ENCODE measurements at regions of chr16 and their contacts with region 1.

Region 1: DNA sequence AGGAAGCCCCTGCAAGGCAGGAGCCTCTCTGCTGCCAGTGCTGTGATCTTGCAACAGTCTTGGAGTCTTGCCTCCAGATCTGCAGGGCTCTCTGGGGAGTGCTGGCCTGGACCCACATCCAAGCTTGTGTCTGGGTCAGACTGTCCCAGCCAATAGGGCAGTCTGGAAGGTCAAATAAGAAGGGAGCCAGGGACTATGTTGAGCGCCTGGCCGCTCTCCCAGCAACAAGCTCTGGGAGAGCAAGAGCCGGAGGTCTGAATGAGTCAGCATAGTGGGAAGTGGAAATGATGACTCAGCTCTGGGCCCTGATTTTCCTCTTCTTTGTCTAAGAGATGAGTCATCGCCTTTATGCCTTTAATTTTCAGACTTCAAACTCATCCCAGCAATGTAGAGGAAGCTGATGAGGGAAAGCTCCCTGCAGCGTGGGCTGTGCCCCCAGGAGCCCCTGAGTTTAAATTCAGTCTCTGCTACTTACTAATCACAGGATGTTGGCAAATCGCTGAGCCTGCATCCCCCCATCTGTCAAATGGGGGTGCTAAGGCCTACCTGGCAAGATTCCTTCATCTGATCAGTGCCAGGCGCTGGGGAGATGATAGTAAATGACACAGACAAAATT is 43.6 kb upstream of the HAPSTR1 start:
- DNase-seq: peak in 1 of 2 donors; percentile 98
- H3K4me3 ChIP-seq: no peak overlapping the region
- H3K27ac ChIP-seq: peak overlapping the region; percentile 75
- H3K4me1 ChIP-seq: peaks cover 21% of the 10 kb centered on the region
- H3K27me3 ChIP-seq: no peaks in the 10 kb centered on the region
- CTCF ChIP-seq: no peak
- POLR2A ChIP-seq: no peak

Region 2: DNA sequence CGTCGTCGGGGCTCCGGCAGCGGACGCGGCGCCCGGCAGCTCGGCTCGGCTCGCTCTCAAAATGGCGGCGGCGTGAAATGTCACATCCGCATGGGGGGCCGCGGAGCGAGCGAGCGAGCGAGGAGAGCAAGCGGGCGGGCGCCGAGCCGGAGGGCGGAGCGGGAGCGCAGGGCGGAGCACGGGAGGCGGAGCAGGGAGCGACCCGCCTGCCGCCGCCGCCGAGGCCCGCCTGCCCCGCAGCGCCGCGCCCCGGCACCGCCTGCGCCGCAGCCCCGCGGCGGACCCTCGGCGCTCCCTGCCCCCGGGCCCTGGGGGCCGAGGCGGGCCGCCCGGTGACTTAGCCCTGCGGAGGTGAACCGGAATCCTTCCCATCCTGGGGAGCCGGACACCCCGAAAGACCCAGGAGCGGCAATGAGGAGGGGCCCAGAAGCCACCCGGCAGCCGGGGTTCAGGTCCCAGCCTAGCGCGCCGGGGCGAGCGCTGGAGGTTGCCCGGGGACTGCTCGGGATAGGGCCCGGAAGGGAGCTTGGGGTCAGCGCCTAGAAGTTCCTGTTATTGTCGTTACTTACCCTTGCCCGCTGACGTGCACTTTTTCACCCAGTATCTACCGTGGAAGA is 83.9 kb before region 1 on chr16 and contains the start of gene USP7:
- intact Hi-C with region 1: loop called (anchors 5 kb)
- DNase-seq: no peak
- H3K4me3 ChIP-seq: peak within 1 kb of the TSS; percentile 80 to 84
- H3K27ac ChIP-seq: peak within 1 kb of the TSS; percentile 81
- H3K4me1 ChIP-seq: peaks cover 44% of the 10 kb centered on the region
- H3K27me3 ChIP-seq: no peaks in the 10 kb centered on the region
- CTCF ChIP-seq: no peak
- POLR2A ChIP-seq: peak in 1 of 2 donors; percentile 55
- total RNA-seq, gene USP7: 112 TPM

Region 3: GRCh38 chr16:9297437-9298113 is 249.8 kb after region 1 on chr16:
- intact Hi-C with region 1: no loop called
- DNase-seq: no peak
- H3K4me3 ChIP-seq: no peak overlapping the region
- H3K27ac ChIP-seq: no peak overlapping the region
- H3K4me1 ChIP-seq: no peaks in the 10 kb centered on the region
- H3K27me3 ChIP-seq: no peaks in the 10 kb centered on the region
- CTCF ChIP-seq: peak in 1 of 3 experiments; percentile 14
- POLR2A ChIP-seq: no peak

Measured in vagina (tissue), 2 donors.